ENCODE measurements at regions of chr11 and their contacts with region 1.

Region 1: DNA sequence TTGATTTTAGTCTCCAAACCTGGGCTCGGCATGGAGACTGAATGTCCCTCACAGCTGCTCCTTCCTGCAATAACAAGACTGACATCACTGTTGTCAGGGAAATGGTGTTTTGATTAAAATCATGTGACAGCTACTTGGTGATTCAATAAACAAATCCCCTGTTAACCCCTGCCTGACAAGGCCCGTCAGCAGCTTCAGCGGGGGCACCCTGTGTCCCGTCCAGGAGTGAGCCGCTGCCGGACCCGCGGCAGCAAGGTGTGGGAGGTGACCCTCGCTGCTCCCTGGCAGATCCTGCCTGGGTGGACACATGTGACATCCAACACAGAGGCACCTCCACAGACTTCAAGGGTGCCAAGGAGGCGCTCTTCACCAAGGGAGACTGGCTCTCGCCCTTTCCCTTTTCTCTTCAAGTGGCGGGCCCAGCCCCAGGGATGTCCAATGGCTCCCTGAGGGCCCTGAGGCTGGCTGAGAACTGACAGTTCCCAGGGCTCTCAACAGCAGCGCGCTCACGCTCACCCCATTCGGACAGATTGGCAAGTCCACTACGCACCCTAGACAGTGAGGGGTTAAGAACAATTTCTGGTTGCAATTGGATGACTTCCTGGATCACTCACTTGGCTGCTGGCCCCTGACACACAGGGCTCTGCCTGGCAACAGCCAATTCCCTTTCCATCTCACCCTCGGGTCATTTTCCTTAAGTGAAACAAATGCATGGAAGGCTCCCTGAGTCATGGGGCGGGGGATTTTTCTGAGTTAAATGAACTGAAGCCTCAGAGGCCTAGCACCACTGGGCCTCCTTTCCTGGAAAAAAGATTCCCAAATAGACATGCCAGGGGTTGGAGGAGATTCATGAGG is 30.7 kb downstream of the PPP2R1B start:
- DNase-seq: peak; percentile 92

Region 2: DNA sequence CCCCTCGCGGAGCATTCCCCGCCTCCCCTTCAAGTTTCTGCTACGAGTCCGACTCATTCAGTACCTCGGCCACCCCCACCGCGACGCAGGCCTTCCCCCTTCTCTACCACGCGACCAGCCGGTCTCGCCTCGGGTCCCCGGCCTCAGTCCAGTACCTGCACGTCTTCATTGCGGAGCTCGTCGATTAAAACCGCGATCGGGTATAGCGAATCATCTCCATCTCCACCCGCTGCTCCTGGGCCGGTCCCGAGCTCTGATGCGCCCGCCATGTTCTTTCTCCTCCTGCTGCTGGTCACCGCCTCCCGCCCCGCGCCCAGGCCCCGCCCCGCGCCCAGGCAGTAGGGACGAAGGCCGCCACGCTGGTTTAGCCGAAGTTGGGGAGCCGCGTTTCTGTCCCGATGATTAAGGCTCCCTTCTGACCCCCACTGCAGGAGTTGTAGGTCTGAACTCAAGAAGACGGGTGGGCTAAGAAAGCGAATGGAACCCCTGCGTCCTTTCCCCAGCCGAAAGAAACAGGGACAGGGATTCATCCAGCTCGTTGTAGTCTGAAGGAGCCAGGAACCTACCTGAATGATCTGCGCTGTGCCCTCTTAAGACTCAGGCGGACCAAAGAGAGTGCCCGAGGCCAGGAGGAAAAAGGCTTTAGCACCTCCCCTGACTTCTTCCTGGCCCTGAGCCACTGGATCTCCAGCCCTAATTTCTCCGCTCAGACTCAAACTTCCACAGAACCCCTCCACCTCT is 30.8 kb after region 1 on chr11 and contains the start of gene PPP2R1B:
- intact Hi-C with region 1: loop called (anchors 2 to 5 kb)
- DNase-seq: peak; percentile 90
- total RNA-seq, gene PPP2R1B: 16.7 to 22.5 TPM